GM12878 (cell line): ENCODE measurements at regions of chr6 and their contacts with region 1.

Region 1: DNA sequence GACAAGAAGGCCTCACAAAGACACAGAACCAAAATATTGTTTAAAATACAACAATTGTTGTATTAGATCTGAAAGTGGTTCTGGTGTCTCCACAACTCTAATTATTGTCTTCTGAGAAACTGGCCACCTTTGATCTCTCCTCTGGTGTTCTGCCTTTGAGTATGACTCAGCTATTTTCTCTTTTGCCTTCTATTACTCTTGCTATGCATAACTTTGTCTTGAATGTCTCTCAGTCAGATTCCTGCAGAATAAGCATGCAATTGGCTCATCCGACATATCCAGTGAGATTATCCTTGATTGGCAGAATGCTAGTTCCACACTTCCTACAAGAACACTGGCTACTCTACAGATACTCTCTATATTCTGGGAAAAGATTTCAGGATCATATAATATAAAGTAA is 14.3 kb upstream of the EPM2A start:
- DNase-seq: no peak
- ATAC-seq: peak; percentile 94
- H3K4me3 ChIP-seq: no peak overlapping the region
- H3K27ac ChIP-seq: no peak overlapping the region
- H3K4me1 ChIP-seq: no peaks in the 10 kb centered on the region; the same call in 1 of the 2 replicates
- H3K27me3 ChIP-seq: no peaks in the 10 kb centered on the region
- CTCF ChIP-seq: no peak
- EP300 ChIP-seq: no peak
- POLR2A ChIP-seq: no peak
- RAD21 ChIP-seq: no peak

Region 2: GRCh38 chr6:145801021-145801420 is 51.4 kb after region 1 on chr6:
- CTCF ChIA-PET with region 1: no interaction called
- POLR2A ChIA-PET with region 1: no interaction called
- RAD21 ChIA-PET with region 1: no interaction called
- SMC1A ChIA-PET with region 1: no interaction called
- in situ Hi-C with region 1: no loop called
- intact Hi-C with region 1: loop called (anchors 5 kb)
- DNase-seq: no peak
- ATAC-seq: peak; percentile 75
- H3K4me3 ChIP-seq: no peak overlapping the region
- H3K27ac ChIP-seq: no peak overlapping the region
- H3K4me1 ChIP-seq: no peaks in the 10 kb centered on the region
- H3K27me3 ChIP-seq: no peaks in the 10 kb centered on the region
- CTCF ChIP-seq: no peak
- EP300 ChIP-seq: no peak
- POLR2A ChIP-seq: no peak
- RAD21 ChIP-seq: no peak

Region 3: GRCh38 chr6:145895802-145896201 is 146.2 kb after region 1 on chr6:
- CTCF ChIA-PET with region 1: no interaction called
- POLR2A ChIA-PET with region 1: no interaction called
- RAD21 ChIA-PET with region 1: no interaction called
- SMC1A ChIA-PET with region 1: no interaction called
- in situ Hi-C with region 1: no loop called
- intact Hi-C with region 1: no loop called
- DNase-seq: no peak
- ATAC-seq: no peak
- H3K4me3 ChIP-seq: no peak overlapping the region
- H3K27ac ChIP-seq: no peak overlapping the region
- H3K4me1 ChIP-seq: no peaks in the 10 kb centered on the region
- H3K27me3 ChIP-seq: no peaks in the 10 kb centered on the region
- CTCF ChIP-seq: no peak; a peak in 1 of 6 replicates
- EP300 ChIP-seq: no peak
- POLR2A ChIP-seq: no peak
- RAD21 ChIP-seq: no peak